CD8-positive, alpha-beta T cell (primary cell): ENCODE measurements at regions of chr14 and their contacts with region 1.

Region 1: DNA sequence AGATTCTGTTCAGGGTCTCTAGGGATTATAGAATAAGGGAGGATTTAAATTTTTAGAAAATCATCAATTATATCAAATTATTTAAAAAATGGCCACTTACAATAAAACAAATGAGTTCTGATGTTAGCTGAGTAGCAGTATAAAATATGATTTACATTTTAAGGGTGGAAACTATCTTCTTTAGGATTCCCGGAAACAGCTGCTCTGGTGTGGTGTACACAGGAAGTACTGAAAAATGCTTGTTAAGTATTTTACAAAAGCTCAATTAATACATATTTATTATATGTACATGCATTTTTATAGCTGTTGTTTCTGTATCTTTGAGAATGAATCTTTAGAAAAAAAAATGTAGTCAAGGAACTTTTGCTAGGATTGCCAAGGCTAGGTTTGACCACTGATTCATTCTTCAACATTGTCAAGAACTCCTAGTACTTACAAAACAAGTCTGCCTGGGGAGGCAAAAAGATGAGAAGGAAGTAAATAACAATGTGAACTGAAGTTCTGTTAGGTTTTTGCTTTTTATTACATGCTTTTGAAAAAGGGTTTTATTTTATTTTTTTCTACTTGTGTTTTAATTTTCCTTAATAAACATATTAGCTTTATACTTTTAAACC is 48.0 kb downstream of the ARF6 start:
- DNase-seq: peak in 3 of 9 experiments; percentile 31 to 59 (median 37)
- ATAC-seq: peak; percentile 49
- H3K4me3 ChIP-seq: no peak overlapping the region
- H3K4me3 Mint-ChIP-seq: peak overlapping the region; percentile 13
- H3K27ac ChIP-seq: peak overlapping the region in 1 of 2 experiments; percentile 53
- H3K27ac Mint-ChIP-seq: peak overlapping the region; percentile 20
- H3K4me1 ChIP-seq: peaks cover 43% of the 10 kb centered on the region
- H3K4me1 Mint-ChIP-seq: peaks cover 59% of the 10 kb centered on the region
- H3K27me3 ChIP-seq: no peaks in the 10 kb centered on the region
- H3K27me3 Mint-ChIP-seq: no peaks in the 10 kb centered on the region
- CTCF ChIP-seq: no peak

Region 2: GRCh38 chr14:49727171-49727570 is 213.7 kb before region 1 on chr14:
- CTCF ChIA-PET with region 1: no interaction called
- POLR2A ChIA-PET with region 1: no interaction called
- intact Hi-C with region 1: no loop called
- DNase-seq: no peak
- ATAC-seq: no peak
- H3K4me3 ChIP-seq: no peak overlapping the region
- H3K4me3 Mint-ChIP-seq: no peak overlapping the region
- H3K27ac ChIP-seq: no peak overlapping the region
- H3K27ac Mint-ChIP-seq: no peak overlapping the region
- H3K4me1 ChIP-seq: no peaks in the 10 kb centered on the region
- H3K4me1 Mint-ChIP-seq: no peaks in the 10 kb centered on the region
- H3K27me3 ChIP-seq: no peaks in the 10 kb centered on the region
- H3K27me3 Mint-ChIP-seq: no peaks in the 10 kb centered on the region
- CTCF ChIP-seq: no peak

Region 3: DNA sequence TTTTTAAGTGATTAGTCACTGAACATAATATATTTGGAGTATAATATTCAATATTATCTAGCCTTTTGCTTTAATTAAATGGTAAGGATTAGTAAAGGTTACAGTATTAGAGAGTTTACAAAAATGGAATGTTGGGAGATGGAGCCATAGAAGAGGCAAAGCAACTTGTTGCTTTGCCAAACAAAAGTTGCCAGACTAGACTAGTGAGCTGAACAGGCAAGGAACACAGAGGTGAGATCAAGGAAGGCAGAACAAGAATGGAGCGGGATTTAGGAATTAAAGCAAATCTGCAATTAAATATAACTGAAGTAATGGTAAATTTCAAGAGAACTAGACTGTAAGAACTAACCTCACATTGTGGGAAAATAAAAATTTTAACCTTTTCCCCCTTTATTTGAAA is 42.9 kb before region 1 on chr14:
- CTCF ChIA-PET with region 1: no interaction called
- POLR2A ChIA-PET with region 1: interaction called, 8 read pairs
- intact Hi-C with region 1: loop called in 1 of 2 experiments (anchors 2 kb)
- DNase-seq: peak in 1 of 9 experiments; percentile 32
- ATAC-seq: no peak
- H3K4me3 ChIP-seq: peak overlapping the region; percentile 17 to 25
- H3K4me3 Mint-ChIP-seq: peak overlapping the region; percentile 67
- H3K27ac ChIP-seq: peak overlapping the region; percentile 1 to 43
- H3K27ac Mint-ChIP-seq: peak overlapping the region; percentile 92
- H3K4me1 ChIP-seq: peaks cover 31% of the 10 kb centered on the region
- H3K4me1 Mint-ChIP-seq: peaks cover 43% of the 10 kb centered on the region
- H3K27me3 ChIP-seq: no peaks in the 10 kb centered on the region
- H3K27me3 Mint-ChIP-seq: no peaks in the 10 kb centered on the region
- CTCF ChIP-seq: no peak

Region 4: DNA sequence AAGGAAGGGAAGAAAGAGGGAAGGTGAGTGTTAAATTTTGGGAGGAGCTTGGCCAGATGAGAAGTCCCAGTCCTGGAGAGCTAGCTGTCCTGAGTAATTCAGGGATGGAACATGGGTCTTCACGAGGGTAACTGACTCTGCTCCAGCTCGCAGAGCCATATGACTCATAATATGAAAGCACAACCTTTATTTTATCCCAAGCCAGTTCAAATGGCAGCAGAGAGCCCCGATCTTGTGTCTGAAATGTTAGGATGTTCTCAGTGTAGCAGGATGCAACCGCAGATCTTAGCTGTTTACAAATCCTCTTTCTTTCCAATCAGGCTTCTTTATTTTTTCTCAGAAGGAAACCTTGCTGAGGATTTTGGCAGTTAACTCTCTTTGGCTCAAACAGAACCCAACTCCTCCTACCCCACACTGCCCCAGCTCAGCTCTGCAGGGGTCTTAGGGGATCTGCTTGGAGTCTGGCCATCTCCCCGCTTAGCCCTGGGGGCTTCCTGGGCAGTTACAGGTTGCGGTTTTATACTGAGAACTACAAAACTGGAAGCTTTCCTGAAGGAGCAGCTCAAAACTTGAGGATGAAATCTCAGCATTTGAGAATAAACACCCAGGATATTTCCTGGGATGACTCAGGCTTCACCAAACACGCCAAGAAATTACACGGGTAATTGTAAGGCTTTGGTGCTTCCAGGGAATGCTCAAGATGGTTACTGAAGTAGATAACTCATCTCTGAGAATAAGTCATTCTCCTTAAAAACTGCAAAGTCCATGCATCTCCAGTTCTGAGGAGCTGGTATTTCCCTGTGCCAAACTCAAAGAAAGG is 83.0 kb after region 1 on chr14:
- CTCF ChIA-PET with region 1: no interaction called
- POLR2A ChIA-PET with region 1: no interaction called
- intact Hi-C with region 1: no loop called
- DNase-seq: no peak
- ATAC-seq: no peak
- H3K4me3 ChIP-seq: no peak overlapping the region
- H3K4me3 Mint-ChIP-seq: no peak overlapping the region
- H3K27ac ChIP-seq: no peak overlapping the region
- H3K27ac Mint-ChIP-seq: no peak overlapping the region
- H3K4me1 ChIP-seq: peaks cover 4% of the 10 kb centered on the region
- H3K4me1 Mint-ChIP-seq: peaks cover 16% of the 10 kb centered on the region
- H3K27me3 ChIP-seq: no peaks in the 10 kb centered on the region
- H3K27me3 Mint-ChIP-seq: no peaks in the 10 kb centered on the region
- CTCF ChIP-seq: no peak